Breast epithelium (tissue), 4 donors: ENCODE measurements at regions of chr15 and their contacts with region 1.

Region 1: GRCh38 chr15:61017627-61018026 is 211.5 kb downstream of the RORA start:
- DNase-seq: no peak
- H3K4me3 ChIP-seq: no peak overlapping the region
- H3K27ac ChIP-seq: no peak overlapping the region
- H3K4me1 ChIP-seq: no peaks in the 10 kb centered on the region
- H3K27me3 ChIP-seq: no peaks in the 10 kb centered on the region
- CTCF ChIP-seq: no peak
- POLR2A ChIP-seq: no peak

Region 2: GRCh38 chr15:60605879-60606304 is 411.7 kb before region 1 on chr15:
- intact Hi-C with region 1: no loop called
- DNase-seq: no peak
- H3K4me3 ChIP-seq: peak overlapping the region in 1 of 3 donors; percentile 5
- H3K27ac ChIP-seq: peak overlapping the region in 1 of 2 donors; percentile 33
- H3K4me1 ChIP-seq: no peaks in the 10 kb centered on the region
- H3K27me3 ChIP-seq: no peaks in the 10 kb centered on the region
- CTCF ChIP-seq: no peak
- POLR2A ChIP-seq: no peak

Region 3: GRCh38 chr15:61534986-61535385 is 517.4 kb after region 1 on chr15:
- intact Hi-C with region 1: loop called (anchors 5 kb)
- DNase-seq: no peak
- H3K4me3 ChIP-seq: no peak overlapping the region
- H3K27ac ChIP-seq: no peak overlapping the region
- H3K4me1 ChIP-seq: no peaks in the 10 kb centered on the region
- H3K27me3 ChIP-seq: no peaks in the 10 kb centered on the region
- CTCF ChIP-seq: no peak
- POLR2A ChIP-seq: no peak

Region 4: DNA sequence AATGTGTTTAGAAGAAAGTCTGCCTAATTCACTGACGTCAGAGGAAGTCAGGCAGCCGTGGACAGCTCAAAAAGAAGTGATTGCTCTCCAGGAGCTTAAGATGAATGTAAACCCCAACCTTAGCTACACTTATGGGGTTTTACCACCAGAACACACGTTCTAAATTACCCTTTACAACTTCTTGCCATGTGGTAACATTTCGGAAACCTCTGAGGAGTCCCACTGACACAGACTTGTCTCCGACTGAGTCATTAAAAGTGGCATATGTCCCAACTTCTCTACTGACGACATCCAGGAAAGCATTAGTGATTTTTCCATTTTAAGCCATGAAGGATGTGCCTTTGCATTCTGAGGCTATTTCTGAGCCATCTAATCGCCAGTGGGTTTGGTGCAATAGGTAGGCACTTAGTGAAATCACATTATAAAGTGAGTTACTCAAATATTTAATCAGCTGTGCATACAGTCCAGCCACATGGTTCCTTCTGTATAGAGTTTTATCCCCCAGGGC is 1081.5 kb after region 1 on chr15:
- intact Hi-C with region 1: no loop called
- DNase-seq: no peak
- H3K4me3 ChIP-seq: no peak overlapping the region
- H3K27ac ChIP-seq: peak overlapping the region in 1 of 2 donors; percentile 29
- H3K4me1 ChIP-seq: no peaks in the 10 kb centered on the region
- H3K27me3 ChIP-seq: no peaks in the 10 kb centered on the region
- CTCF ChIP-seq: no peak
- POLR2A ChIP-seq: no peak

Region 5: GRCh38 chr15:62698646-62699045 is 1681.0 kb after region 1 on chr15:
- intact Hi-C with region 1: no loop called
- DNase-seq: no peak
- H3K4me3 ChIP-seq: no peak overlapping the region
- H3K27ac ChIP-seq: no peak overlapping the region
- H3K4me1 ChIP-seq: no peaks in the 10 kb centered on the region
- H3K27me3 ChIP-seq: no peaks in the 10 kb centered on the region
- CTCF ChIP-seq: no peak
- POLR2A ChIP-seq: no peak